Naive thymus-derived CD4-positive, alpha-beta T cell (primary cell): ENCODE measurements at regions of chr20 and their contacts with region 1.

Region 1: DNA sequence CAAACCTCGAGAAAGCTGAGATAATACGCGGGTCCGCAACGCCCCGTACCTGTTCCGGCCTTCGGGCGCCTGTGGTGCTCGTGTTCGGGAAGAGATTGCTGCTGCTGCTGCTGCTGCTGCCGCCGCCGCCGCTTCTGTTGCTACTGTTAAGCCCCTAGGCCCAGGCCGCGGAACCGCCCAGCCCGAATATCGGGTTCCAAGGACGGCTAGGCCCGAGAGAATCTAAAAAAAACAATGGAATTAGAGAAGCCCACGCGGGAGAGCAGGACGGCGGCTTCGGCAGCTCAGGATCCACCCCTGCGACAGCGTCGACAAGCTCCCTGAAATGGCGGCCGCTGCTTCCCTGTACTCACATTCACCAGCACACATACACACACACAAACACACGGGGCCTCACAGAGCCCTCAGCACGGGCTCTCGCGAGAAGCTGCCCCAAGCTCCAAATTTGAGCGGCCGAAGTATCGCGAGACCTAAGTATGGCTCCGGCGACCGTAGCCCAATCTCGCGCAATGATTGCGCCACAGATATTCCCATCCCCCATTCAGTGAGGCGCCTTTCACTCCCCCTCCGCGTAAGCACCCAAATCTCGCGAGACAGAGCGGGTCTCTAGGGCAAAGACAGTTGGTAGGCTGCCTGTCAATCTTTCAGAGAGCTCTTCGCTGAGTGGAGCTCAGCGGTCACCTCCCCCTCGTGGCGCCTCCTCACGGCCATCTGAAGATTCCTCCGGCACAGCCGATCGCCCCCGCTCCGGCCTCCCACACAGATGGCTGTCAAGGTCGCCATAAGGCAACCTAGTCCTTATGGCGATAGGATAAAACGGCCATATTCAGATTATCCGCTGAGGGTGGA is at the start of gene RBM39:
- DNase-seq: peak; percentile 92 to 100 (median 99)
- ATAC-seq: peak; percentile 92
- H3K4me3 ChIP-seq: peak within 1 kb of the TSS; percentile 98
- H3K4me3 Mint-ChIP-seq: peak within 1 kb of the TSS; percentile 86 to 100 (median 98)
- H3K27ac ChIP-seq: peak within 1 kb of the TSS; percentile 98
- H3K27ac Mint-ChIP-seq: peak within 1 kb of the TSS; percentile 96 to 100 (median 100)
- H3K4me1 ChIP-seq: peaks cover 34 to 49% of the 10 kb centered on the region in 2 donors
- H3K4me1 Mint-ChIP-seq: peaks cover 22 to 53% (median 45%) of the 10 kb centered on the region in 7 donors
- H3K27me3 ChIP-seq: no peaks in the 10 kb centered on the region
- H3K27me3 Mint-ChIP-seq: no peaks in the 10 kb centered on the region
- total RNA-seq, gene RBM39: 372 to 1,041 (median 699) TPM

Region 2: GRCh38 chr20:34111702-34112599 is 1630.2 kb before region 1 on chr20 and contains the start of gene EIF2S2:
- CTCF ChIA-PET with region 1: no interaction called
- POLR2A ChIA-PET with region 1: no interaction called
- intact Hi-C with region 1: loop called in 1 of 2 experiments (anchors 5 kb)
- DNase-seq: peak; percentile 88 to 97 (median 95)
- ATAC-seq: peak; percentile 95
- H3K4me3 ChIP-seq: peak within 1 kb of the TSS; percentile 92
- H3K4me3 Mint-ChIP-seq: peak within 1 kb of the TSS; percentile 87 to 98 (median 96)
- H3K27ac ChIP-seq: peak within 1 kb of the TSS; percentile 89
- H3K27ac Mint-ChIP-seq: peak within 1 kb of the TSS; percentile 96 to 99 (median 98)
- H3K4me1 ChIP-seq: peaks cover 24 to 34% of the 10 kb centered on the region in 2 donors
- H3K4me1 Mint-ChIP-seq: peaks cover 34 to 53% (median 47%) of the 10 kb centered on the region in 7 donors
- H3K27me3 ChIP-seq: no peaks in the 10 kb centered on the region
- H3K27me3 Mint-ChIP-seq: peaks cover 0 to 15% (median 0%) of the 10 kb centered on the region in 5 donors
- total RNA-seq, gene EIF2S2: 16.8 to 68.4 (median 48.6) TPM

Region 3: GRCh38 chr20:34861386-34862084 is 880.6 kb before region 1 on chr20:
- CTCF ChIA-PET with region 1: no interaction called
- POLR2A ChIA-PET with region 1: no interaction called
- intact Hi-C with region 1: no loop called
- DNase-seq: peak in 1 of 9 donors; percentile 11
- ATAC-seq: no peak
- H3K4me3 ChIP-seq: no peak overlapping the region
- H3K4me3 Mint-ChIP-seq: no peak overlapping the region
- H3K27ac ChIP-seq: no peak overlapping the region
- H3K27ac Mint-ChIP-seq: no peak overlapping the region
- H3K4me1 ChIP-seq: no peaks in the 10 kb centered on the region
- H3K4me1 Mint-ChIP-seq: peaks cover 0 to 17% (median 5%) of the 10 kb centered on the region in 7 donors
- H3K27me3 ChIP-seq: no peaks in the 10 kb centered on the region
- H3K27me3 Mint-ChIP-seq: no peaks in the 10 kb centered on the region

Region 4: DNA sequence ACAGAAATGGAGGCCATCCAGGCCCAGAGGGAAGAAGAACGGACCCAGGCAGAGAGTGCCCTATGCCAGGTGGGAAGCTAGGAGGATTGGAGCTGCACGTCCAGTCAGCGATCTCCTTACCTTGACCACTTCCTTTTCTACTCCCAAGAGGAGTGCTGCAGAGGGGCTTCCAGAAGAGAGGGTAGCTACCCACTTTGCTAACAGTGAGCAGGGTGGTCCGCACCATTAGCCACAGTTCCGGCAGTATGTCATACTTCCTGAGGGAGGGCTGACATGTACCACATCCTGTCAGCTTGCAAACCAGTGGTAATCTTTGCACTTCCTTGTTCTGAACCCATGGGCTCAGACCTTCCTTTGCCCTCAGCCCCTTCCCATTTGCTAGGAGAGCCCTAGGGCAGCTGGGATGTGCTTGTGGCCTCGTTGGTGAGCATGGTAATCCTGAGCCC is 251.4 kb before region 1 on chr20:
- CTCF ChIA-PET with region 1: no interaction called
- POLR2A ChIA-PET with region 1: interaction called, 13 read pairs
- intact Hi-C with region 1: no loop called
- DNase-seq: peak; percentile 27 to 77 (median 67)
- ATAC-seq: peak; percentile 99
- H3K4me3 ChIP-seq: peak overlapping the region; percentile 92
- H3K4me3 Mint-ChIP-seq: peak overlapping the region; percentile 99 to 100 (median 99)
- H3K27ac ChIP-seq: peak overlapping the region; percentile 84
- H3K27ac Mint-ChIP-seq: peak overlapping the region; percentile 98 to 100 (median 99)
- H3K4me1 ChIP-seq: peaks cover 23 to 27% of the 10 kb centered on the region in 2 donors
- H3K4me1 Mint-ChIP-seq: peaks cover 47 to 92% (median 72%) of the 10 kb centered on the region in 7 donors
- H3K27me3 ChIP-seq: no peaks in the 10 kb centered on the region
- H3K27me3 Mint-ChIP-seq: no peaks in the 10 kb centered on the region

Region 5: DNA sequence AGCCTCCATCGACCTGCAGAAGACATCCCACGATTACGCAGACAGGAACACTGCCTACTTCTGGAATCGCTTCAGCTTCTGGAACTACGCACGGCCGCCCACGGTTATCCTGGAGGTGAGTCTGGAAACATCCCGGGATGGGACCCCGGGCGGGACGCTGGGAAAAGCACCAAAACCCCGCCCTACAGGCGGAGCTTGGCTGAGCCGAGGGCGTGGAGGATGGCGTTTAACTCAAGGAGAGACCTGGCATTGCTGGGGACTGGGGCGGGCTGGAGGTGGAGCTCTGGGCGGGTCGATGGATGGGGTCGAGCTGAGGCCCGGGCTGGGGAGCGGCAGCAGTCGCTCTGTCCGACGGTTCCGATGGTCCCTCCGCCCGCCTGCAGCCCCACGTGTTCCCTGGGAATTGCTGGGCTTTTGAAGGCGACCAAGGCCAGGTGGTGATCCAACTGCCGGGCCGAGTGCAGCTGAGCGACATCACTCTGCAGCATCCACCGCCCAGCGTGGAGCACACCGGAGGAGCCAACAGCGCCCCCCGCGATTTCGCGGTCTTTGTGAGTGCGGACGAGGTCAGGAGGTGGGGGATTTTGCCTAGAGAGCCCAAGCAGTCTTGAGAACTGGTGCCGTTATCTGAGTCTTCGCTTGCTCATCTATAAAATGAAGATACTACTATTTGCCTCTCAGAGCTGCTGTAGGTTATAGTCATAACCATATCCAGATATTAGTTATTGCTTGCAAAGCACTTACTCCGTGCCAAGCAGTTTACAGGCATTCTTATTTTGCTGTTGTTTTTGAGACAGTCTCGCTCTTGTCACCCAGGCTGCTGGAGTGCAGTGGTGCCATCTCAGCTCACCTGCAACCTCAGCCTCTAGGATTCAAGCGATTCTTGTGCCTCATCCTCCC is 122.7 kb before region 1 on chr20:
- CTCF ChIA-PET with region 1: no interaction called
- POLR2A ChIA-PET with region 1: interaction called, 15 read pairs
- intact Hi-C with region 1: loop called (anchors 1 kb)
- DNase-seq: peak; percentile 54 to 84 (median 68)
- ATAC-seq: peak; percentile 31
- H3K4me3 ChIP-seq: peak overlapping the region; percentile 70
- H3K4me3 Mint-ChIP-seq: peak overlapping the region; percentile 87 to 98 (median 91)
- H3K27ac ChIP-seq: peak overlapping the region; percentile 27
- H3K27ac Mint-ChIP-seq: peak overlapping the region; percentile 62 to 90 (median 85)
- H3K4me1 ChIP-seq: peaks cover 16 to 28% of the 10 kb centered on the region in 2 donors
- H3K4me1 Mint-ChIP-seq: peaks cover 13 to 45% (median 34%) of the 10 kb centered on the region in 7 donors
- H3K27me3 ChIP-seq: no peaks in the 10 kb centered on the region
- H3K27me3 Mint-ChIP-seq: peaks cover 0 to 3% (median 0%) of the 10 kb centered on the region in 5 donors

Region 6: GRCh38 chr20:35711588-35712209 is 30.4 kb before region 1 on chr20:
- CTCF ChIA-PET with region 1: interaction called, 5 read pairs
- POLR2A ChIA-PET with region 1: interaction called, 85 read pairs
- intact Hi-C with region 1: no loop called
- DNase-seq: no peak
- ATAC-seq: no peak
- H3K4me3 ChIP-seq: no peak overlapping the region
- H3K4me3 Mint-ChIP-seq: peak overlapping the region; percentile 2 to 60 (median 51)
- H3K27ac ChIP-seq: peak overlapping the region; percentile 53
- H3K27ac Mint-ChIP-seq: peak overlapping the region; percentile 36 to 89 (median 75)
- H3K4me1 ChIP-seq: peaks cover 16 to 29% of the 10 kb centered on the region in 2 donors
- H3K4me1 Mint-ChIP-seq: peaks cover 28 to 72% (median 59%) of the 10 kb centered on the region in 7 donors
- H3K27me3 ChIP-seq: no peaks in the 10 kb centered on the region
- H3K27me3 Mint-ChIP-seq: no peaks in the 10 kb centered on the region

Region 7: DNA sequence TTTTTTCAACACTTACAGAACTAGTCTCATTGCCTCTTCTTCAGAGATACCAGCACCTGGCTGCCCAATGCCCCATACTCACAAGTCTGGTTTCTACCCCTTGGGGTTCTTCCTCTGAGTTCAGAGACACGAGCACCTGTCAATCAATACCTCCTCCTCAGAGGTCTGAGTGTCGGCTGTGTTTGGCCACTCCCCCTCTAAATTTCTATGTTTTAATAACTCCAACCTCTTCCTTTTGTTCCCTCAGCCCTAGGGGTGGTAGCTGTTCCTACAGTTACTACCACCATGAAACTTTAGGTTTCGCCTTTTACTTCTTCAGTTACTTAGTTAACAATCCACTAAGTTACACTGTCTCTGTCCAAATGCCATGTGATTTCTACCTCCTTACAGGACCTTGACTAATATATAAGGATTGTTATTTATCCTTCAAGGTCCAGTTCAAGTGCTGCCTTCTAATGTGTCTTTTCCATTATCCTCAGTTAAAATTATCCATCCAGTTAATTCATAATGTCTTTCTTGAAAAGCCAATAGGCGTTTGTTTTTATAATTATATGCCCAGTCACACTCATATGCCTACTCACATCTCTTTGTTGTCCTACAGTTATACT is 15.1 kb after region 1 on chr20:
- CTCF ChIA-PET with region 1: interaction called, 6 read pairs
- POLR2A ChIA-PET with region 1: interaction called, 733 read pairs
- intact Hi-C with region 1: no loop called
- DNase-seq: no peak
- ATAC-seq: no peak
- H3K4me3 ChIP-seq: no peak overlapping the region
- H3K4me3 Mint-ChIP-seq: no peak overlapping the region
- H3K27ac ChIP-seq: no peak overlapping the region
- H3K27ac Mint-ChIP-seq: peak overlapping the region in 3 of 9 donors; percentile 1 to 42 (median 28)
- H3K4me1 ChIP-seq: no peaks in the 10 kb centered on the region
- H3K4me1 Mint-ChIP-seq: peaks cover 0 to 15% (median 10%) of the 10 kb centered on the region in 7 donors
- H3K27me3 ChIP-seq: no peaks in the 10 kb centered on the region
- H3K27me3 Mint-ChIP-seq: peaks cover 0 to 16% (median 0%) of the 10 kb centered on the region in 5 donors

Region 8: GRCh38 chr20:35801865-35802264 is 59.7 kb after region 1 on chr20:
- CTCF ChIA-PET with region 1: no interaction called
- POLR2A ChIA-PET with region 1: interaction called, 41 read pairs
- intact Hi-C with region 1: no loop called
- DNase-seq: no peak
- ATAC-seq: no peak
- H3K4me3 ChIP-seq: no peak overlapping the region
- H3K4me3 Mint-ChIP-seq: no peak overlapping the region
- H3K27ac ChIP-seq: peak overlapping the region; percentile 16
- H3K27ac Mint-ChIP-seq: peak overlapping the region in 8 of 9 donors; percentile 68 to 89 (median 82)
- H3K4me1 ChIP-seq: peaks cover 0 to 9% of the 10 kb centered on the region in 2 donors
- H3K4me1 Mint-ChIP-seq: peaks cover 3 to 28% (median 23%) of the 10 kb centered on the region in 7 donors
- H3K27me3 ChIP-seq: no peaks in the 10 kb centered on the region
- H3K27me3 Mint-ChIP-seq: no peaks in the 10 kb centered on the region